ENCODE measurements at regions of chr2 and their contacts with region 1.

Region 1: GRCh38 chr2:85888684-85889626 is at the start of gene ST3GAL5:
- DNase-seq: no peak
- H3K4me3 ChIP-seq: peak within 1 kb of the TSS; percentile 69
- H3K27me3 ChIP-seq: no peaks in the 10 kb centered on the region
- CTCF ChIP-seq: peak; percentile 74
- polyA plus RNA-seq, gene ST3GAL5: 16.0 and 19.7 TPM in 2 replicates

Region 2: DNA sequence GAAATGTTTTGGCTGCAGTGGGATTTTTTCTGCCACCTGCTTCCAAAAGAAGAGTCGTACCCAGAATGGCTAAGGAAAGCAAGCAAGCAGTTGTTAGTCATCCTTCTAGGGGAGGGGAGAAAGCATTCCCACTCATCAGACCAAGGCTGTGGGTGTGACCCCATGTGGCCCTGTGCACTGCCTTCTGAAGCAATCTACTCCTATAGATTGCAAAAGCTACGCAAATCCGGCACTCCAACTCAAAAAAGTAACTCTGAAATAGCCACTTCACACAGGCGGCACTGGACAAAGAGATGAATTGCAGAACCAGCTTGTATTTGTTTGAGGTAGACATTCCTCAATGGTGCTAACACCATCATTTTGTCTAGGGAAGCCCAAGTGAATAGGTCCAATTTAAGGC is 44.5 kb before region 1 on chr2:
- CTCF ChIA-PET with region 1: interaction called, 12 read pairs
- POLR2A ChIA-PET with region 1: no interaction called
- DNase-seq: no peak
- H3K4me3 ChIP-seq: no peak overlapping the region
- H3K27me3 ChIP-seq: no peaks in the 10 kb centered on the region
- CTCF ChIP-seq: no peak

Region 3: DNA sequence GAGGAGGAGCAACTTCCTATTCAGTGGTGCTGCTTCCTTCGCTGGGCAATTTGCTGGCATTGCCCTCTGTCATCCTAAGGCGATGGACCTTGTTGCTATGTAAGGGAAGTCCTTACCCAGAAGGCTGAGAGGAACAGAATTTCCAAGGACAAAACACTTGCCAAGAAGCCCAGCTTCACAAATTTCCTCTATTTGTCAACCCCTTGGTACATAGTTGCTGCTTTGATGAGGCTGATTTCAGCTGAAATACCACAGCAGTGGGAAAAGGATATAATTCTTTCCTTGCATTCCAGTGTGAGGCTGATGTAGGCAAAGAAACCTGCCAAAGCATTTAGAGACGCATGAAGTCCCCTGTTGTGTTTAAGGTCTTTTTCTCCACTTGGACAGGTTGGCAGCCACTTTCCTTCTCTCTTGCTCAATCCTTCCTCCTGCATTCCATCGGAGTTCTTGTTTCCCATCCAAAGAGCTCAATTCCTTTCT is 16.3 kb after region 1 on chr2:
- CTCF ChIA-PET with region 1: interaction called, 50 read pairs
- POLR2A ChIA-PET with region 1: no interaction called
- DNase-seq: no peak
- H3K4me3 ChIP-seq: no peak overlapping the region
- H3K27me3 ChIP-seq: no peaks in the 10 kb centered on the region
- CTCF ChIP-seq: no peak

Region 4: DNA sequence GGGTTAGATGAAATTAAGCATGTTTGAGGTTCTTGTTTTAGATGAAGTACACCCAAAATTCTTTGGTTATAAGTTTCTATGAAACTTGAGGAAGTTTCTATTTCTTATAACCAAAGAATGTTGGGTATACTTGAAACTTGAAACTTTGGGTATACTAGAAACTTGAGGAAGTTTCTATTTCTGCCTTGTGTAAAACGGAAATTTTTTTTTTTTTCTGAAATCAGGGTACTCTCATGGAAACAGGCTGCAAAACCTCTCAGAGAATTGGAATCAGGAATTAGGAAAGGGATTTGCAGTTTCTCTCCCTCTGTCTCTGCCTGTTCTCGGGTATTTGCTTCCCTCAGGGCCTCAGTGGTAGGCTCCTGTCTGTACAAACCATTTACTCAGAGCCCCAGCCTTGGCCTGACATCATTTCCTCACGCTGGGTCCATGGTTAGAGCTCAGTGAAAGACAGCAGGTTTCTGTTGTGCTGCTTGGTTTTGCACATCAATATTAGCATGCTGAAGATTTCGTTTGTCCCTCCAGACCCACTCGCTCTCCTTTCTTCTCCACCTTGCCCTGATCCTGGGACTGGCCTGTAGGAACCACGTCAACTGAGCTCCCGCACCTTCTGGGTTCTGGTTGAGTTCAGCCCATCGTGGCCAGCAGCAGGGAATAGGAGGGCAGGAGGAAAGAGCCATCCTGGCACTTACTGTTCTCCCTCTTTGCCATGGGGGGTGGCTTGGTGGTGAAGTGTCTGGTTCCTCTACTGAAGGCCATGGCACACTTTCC is 110.3 kb after region 1 on chr2:
- CTCF ChIA-PET with region 1: interaction called, 17 read pairs
- POLR2A ChIA-PET with region 1: interaction called, 3 read pairs
- DNase-seq: no peak
- H3K4me3 ChIP-seq: no peak overlapping the region
- H3K27me3 ChIP-seq: no peaks in the 10 kb centered on the region
- CTCF ChIP-seq: no peak

Region 5: GRCh38 chr2:86035883-86036668 is 147.1 kb after region 1 on chr2:
- CTCF ChIA-PET with region 1: interaction called, 24 read pairs
- POLR2A ChIA-PET with region 1: interaction called, 3 read pairs
- DNase-seq: peak; percentile 53
- H3K4me3 ChIP-seq: no peak overlapping the region
- H3K27me3 ChIP-seq: no peaks in the 10 kb centered on the region
- CTCF ChIP-seq: peak; percentile 53